G401 (cell line): ENCODE measurements at regions of chr1 and their contacts with region 1.

Region 1: DNA sequence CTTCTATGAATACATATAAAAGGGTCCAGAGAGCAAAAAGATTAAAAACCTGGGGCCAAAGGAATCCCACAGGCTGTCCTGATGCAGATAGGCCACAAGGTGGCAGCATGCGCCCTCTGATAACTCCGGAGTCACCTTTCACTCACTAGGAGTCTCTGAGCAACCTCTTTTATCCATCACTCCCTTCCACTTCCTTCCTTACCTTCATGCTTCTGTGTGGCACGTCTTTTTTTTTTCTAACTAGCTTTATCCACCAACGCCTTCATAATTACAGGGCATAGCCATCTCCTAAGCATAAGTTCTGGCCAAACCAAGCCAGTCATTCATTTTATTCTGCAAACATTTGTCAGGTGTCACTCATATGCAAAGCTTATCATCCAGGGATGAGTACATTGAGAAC is 3.9 kb upstream of the PGLYRP4 start:
- DNase-seq: peak; percentile 70

Region 2: GRCh38 chr1:153465811-153466636 is 113.5 kb after region 1 on chr1:
- in situ Hi-C with region 1: loop called (anchors 10 kb)
- DNase-seq: peak; percentile 2

Region 3: GRCh38 chr1:153510984-153511410 is 158.5 kb after region 1 on chr1:
- in situ Hi-C with region 1: no loop called
- DNase-seq: peak; percentile 82

Region 4: DNA sequence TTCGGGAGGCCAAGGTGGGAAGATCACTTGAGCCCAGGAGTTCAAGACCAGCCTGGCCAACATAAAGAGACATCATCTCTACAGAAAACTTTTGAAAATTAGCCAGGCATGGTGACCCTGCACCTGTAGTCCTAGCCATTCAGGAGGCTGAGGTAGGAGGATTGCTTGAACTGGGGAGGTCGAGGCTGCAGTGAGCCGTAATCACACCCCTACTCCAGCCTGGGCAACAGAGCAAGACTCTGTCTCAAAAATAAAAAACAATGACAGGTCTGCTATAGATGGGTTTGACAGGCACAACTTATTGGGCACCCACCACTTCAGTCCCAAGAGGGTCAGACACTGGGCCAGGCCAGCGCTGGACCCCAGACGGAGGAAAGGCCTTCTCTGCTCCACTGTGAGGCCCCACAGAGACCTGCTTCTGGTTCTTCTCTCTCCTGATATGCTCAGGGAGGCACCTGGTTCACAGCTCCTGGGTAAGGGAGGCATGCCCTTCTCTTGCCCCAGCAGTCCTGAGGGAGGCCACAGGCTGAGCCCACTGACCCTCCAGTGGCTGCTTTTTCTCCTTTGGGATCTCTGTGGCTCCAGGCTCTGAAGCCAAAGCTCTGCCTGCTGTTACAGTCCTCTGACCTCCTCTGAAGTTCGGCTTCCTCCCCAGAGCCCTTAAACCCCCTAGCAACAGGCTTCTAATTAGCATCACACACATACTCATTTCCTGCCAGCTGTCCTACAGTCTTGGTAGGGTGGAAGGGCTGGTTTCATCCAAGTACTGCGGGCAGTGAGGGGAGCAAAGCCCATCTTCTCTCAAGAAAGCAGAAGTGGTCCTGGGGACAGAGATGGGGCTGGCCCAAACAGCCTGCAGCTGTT is 246.0 kb after region 1 on chr1:
- in situ Hi-C with region 1: loop called (anchors 25 kb)
- DNase-seq: no peak